A549 (cell line): ENCODE measurements at regions of chr20 and their contacts with region 1.

Region 1: DNA sequence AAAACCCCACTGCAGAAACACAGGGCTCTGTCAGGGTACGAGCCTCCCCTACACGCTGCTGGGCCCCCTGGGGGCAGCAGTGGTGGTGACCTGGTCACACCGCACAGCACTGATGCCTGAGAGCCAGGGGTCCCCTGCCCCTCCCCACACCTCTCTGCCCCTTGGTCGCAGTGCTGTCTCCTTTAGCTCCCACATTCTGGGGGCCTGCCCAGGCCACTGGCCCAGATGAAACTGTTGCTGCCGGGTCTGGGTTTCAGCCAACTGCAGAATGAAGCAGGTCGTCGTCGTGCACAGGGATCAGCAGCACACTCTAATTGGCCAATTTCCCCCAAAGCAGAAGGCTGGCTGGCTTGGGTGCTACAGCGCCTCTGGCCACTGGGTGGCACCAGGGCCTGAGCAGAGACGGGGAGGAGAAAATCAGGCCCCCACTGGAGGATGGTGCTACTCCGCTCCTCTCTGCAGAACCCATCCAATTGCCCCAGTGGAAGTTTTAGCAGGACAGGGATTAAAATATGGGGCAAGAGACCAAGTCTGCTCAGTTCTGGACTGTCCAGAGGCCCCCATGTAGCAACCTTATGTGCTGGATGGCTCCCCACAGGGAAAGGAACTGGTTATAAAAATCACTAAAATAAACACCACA is 26.1 kb downstream of the DIDO1 start:
- DNase-seq: peak; percentile 59 to 92
- ATAC-seq: peak; percentile 93 to 94
- H3K4me3 ChIP-seq: no peak overlapping the region
- H3K27ac ChIP-seq: no peak overlapping the region
- H3K4me1 ChIP-seq: peaks cover 5% of the 10 kb centered on the region; the same call in 2 of the 3 replicates
- CTCF ChIP-seq: peak; percentile 64
- EP300 ChIP-seq: no peak
- POLR2A ChIP-seq: no peak
- RAD21 ChIP-seq: peak; percentile 59 to 62

Region 2: GRCh38 chr20:62887147-62887859 is 12.9 kb before region 1 on chr20:
- CTCF ChIA-PET with region 1: interaction called, 123 read pairs
- POLR2A ChIA-PET with region 1: interaction called, 3 read pairs
- DNase-seq: no peak
- ATAC-seq: peak in 1 of 2 experiments; percentile 24; a peak in 2 of 6 replicates
- H3K4me3 ChIP-seq: no peak overlapping the region
- H3K27ac ChIP-seq: no peak overlapping the region
- H3K4me1 ChIP-seq: no peaks in the 10 kb centered on the region
- CTCF ChIP-seq: no peak
- EP300 ChIP-seq: no peak
- POLR2A ChIP-seq: no peak
- RAD21 ChIP-seq: no peak

Region 3: DNA sequence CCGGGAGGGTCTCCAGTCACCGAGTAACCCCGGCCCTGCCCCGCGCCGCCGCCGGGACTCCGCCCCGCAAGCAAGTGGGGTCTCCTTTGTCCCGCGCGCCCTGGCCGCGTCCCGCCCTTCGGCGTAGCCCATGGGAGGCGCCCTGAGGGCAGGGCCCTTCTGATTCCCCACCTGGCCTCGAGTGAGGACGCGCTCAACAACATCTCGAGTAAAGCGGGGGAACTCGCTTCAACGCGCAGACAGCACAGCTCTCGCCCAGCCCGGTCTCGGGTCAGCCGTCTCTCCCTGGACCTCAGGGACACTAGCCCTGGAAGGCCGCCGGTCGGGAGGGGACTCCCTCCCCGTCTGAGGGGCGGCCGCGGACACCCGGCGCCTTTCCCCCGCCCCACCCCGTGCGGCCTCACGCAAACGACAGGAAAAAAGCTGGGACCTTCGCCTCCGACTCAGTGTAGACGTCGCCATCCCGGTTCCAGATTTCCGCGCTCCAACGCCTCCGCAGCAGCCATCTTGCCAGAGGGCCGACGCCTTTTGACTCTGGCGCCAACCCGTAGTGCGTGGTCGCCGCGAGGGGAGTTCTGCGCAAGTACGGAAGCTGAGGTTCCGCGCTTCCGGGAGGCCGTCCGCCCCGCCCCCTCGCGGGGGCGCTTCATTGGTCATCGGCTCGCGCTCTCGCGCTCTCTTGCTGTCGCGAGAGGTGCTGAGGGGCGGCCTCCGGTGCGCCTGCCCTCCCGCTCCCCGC is 37.4 kb after region 1 on chr20:
- CTCF ChIA-PET with region 1: interaction called, 20 read pairs
- POLR2A ChIA-PET with region 1: no interaction called
- DNase-seq: peak; percentile 83 to 96
- ATAC-seq: peak; percentile 93
- H3K4me3 ChIP-seq: peak overlapping the region; percentile 68
- H3K27ac ChIP-seq: peak overlapping the region; percentile 91 to 94
- H3K4me1 ChIP-seq: peaks cover 28% of the 10 kb centered on the region
- CTCF ChIP-seq: no peak
- EP300 ChIP-seq: no peak
- POLR2A ChIP-seq: peak; percentile 75
- RAD21 ChIP-seq: no peak

Region 4: DNA sequence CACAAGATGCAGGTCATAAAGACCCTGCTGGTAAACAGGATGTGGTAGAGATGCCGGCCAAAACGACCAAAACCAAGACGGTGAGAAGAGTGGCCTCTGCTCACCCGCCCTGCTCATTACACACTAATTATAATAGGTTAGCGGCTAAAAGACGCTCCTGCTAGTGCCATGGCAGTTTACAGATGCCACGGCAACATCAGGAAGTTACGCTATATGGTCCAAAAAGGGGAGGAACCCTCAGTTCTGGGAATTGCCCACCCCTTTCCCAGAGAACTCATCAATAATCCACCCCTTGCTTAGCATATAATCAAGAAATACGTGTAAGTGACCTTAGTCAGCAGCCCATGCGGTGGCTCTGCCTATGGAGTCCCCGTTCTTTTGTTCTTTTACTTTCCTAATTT is 89.0 kb after region 1 on chr20:
- CTCF ChIA-PET with region 1: no interaction called
- POLR2A ChIA-PET with region 1: no interaction called
- DNase-seq: no peak
- ATAC-seq: no peak
- H3K4me3 ChIP-seq: no peak overlapping the region
- H3K27ac ChIP-seq: no peak overlapping the region
- H3K4me1 ChIP-seq: no peaks in the 10 kb centered on the region
- CTCF ChIP-seq: no peak
- EP300 ChIP-seq: no peak
- POLR2A ChIP-seq: no peak
- RAD21 ChIP-seq: no peak

Region 5: GRCh38 chr20:63025534-63026331 is 125.6 kb after region 1 on chr20:
- CTCF ChIA-PET with region 1: no interaction called
- POLR2A ChIA-PET with region 1: no interaction called
- DNase-seq: peak in 1 of 2 experiments; percentile 23
- ATAC-seq: peak in 1 of 2 experiments; percentile 11; a peak in 3 of 6 replicates
- H3K4me3 ChIP-seq: no peak overlapping the region
- H3K27ac ChIP-seq: no peak overlapping the region
- H3K4me1 ChIP-seq: 0 out of 3 replicates have a peak, but pooled peaks cover 2% of the 10 kb centered on the region
- CTCF ChIP-seq: no peak
- EP300 ChIP-seq: no peak
- POLR2A ChIP-seq: no peak; the same call in 1 of the 2 replicates
- RAD21 ChIP-seq: no peak

Region 6: DNA sequence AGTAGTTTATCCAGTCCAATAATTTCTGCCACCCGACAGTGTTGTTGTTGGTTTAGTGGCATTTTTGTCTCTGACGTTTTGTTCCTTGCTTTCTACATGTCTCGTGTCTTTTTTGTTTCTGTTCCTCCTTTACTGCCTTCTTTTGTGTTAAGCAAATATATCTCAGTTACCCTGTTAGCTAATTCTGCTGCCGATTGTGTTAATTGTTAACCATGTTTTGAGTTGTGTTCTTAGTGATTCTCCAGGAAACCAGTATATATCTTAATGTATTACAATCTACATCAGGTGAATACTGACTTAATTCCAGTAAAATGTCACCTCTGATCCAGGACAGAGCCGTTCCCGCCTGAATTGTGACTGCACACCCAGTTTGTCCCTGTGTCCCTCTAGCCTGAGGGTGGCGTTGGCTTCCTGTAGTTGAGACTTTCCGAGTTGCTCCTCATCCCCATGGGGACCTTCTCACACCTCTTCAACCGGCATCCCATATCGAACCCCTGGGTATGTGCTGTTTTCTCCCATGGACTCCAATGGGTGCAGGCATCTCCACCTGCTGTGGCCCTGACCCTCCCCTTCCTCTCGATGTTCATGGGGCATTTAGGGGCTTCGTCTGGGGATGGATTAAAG is 142.4 kb after region 1 on chr20:
- CTCF ChIA-PET with region 1: no interaction called
- POLR2A ChIA-PET with region 1: no interaction called
- DNase-seq: no peak
- ATAC-seq: no peak
- H3K4me3 ChIP-seq: no peak overlapping the region
- H3K27ac ChIP-seq: no peak overlapping the region
- H3K4me1 ChIP-seq: no peaks in the 10 kb centered on the region
- CTCF ChIP-seq: no peak
- EP300 ChIP-seq: no peak
- POLR2A ChIP-seq: no peak
- RAD21 ChIP-seq: 0 out of 5 replicates have a peak, but pooled peaks of 1 of the 2 experiments have one; percentile 3